Right cardiac atrium (tissue), 5 donors: ENCODE measurements at regions of chr22 and their contacts with region 1.

Region 1: GRCh38 chr22:34414484-34415440 is 494.5 kb upstream of the LARGE1 start:
- DNase-seq: no peak
- ATAC-seq: no peak
- H3K4me3 ChIP-seq: no peak overlapping the region
- H3K27ac ChIP-seq: no peak overlapping the region
- H3K4me1 ChIP-seq: no peaks in the 10 kb centered on the region
- H3K27me3 ChIP-seq: no peaks in the 10 kb centered on the region

Region 2: DNA sequence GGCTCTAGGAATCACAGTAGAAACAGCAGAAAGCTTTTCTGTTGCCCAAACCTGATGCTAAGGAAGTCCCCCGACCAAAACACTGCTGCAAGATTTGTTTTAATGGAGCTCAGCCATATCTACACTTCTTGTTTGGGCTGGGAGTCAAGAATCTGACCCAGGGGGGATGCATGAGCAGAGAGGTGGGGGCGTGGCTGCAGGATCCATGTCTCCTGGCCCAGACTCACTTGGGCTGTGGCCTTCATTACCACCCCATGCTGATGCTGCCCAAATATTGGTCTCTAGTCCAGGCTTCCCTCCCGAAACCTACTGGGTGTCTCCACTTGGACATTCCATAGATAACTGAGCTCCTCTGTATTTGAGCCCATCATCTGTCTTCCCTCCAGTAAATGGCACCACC is 133.0 kb before region 1 on chr22:
- intact Hi-C with region 1: no loop called
- DNase-seq: peak in 2 of 3 donors; percentile 14 to 40
- ATAC-seq: peak; percentile 24 to 73
- H3K4me3 ChIP-seq: no peak overlapping the region
- H3K27ac ChIP-seq: no peak overlapping the region
- H3K4me1 ChIP-seq: no peaks in the 10 kb centered on the region
- H3K27me3 ChIP-seq: no peaks in the 10 kb centered on the region

Region 3: GRCh38 chr22:35150183-35151107 is 735.7 kb after region 1 on chr22:
- intact Hi-C with region 1: loop called in 1 of 4 experiments (anchors 10 kb)
- DNase-seq: peak; percentile 57 to 81 (median 80)
- ATAC-seq: peak; percentile 54 to 59
- H3K4me3 ChIP-seq: no peak overlapping the region
- H3K27ac ChIP-seq: no peak overlapping the region
- H3K4me1 ChIP-seq: no peaks in the 10 kb centered on the region
- H3K27me3 ChIP-seq: no peaks in the 10 kb centered on the region